GM12878 (cell line): ENCODE measurements at regions of chr3 and their contacts with region 1.

Region 1: DNA sequence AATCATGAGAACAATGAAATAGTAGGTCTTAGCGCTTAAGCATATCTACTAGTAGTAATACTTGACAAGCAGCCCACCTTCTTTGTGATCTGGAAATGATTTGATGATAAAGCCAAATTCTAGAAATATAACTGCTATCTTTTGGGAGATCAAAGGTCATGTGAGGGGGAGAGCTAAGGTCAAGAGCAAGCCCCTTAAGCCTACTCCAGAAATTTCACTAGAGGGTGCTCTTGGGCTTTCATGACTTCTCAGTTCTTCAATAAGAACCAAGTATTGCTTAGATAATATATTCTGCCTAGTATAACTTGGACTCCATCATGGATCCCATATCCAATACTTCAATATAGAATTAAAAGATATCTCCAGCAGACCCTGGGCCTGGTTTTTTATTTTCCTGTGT is 319.6 kb downstream of the ZBTB20 start:
- DNase-seq: peak; percentile 16
- ATAC-seq: peak; percentile 92
- H3K4me3 ChIP-seq: no peak overlapping the region
- H3K27ac ChIP-seq: no peak overlapping the region
- H3K4me1 ChIP-seq: no peaks in the 10 kb centered on the region
- H3K27me3 ChIP-seq: no peaks in the 10 kb centered on the region
- CTCF ChIP-seq: peak; percentile 59 to 69 (median 61); a peak in 5 of 6 replicates
- EP300 ChIP-seq: no peak
- POLR2A ChIP-seq: no peak
- RAD21 ChIP-seq: peak; percentile 84

Region 2: DNA sequence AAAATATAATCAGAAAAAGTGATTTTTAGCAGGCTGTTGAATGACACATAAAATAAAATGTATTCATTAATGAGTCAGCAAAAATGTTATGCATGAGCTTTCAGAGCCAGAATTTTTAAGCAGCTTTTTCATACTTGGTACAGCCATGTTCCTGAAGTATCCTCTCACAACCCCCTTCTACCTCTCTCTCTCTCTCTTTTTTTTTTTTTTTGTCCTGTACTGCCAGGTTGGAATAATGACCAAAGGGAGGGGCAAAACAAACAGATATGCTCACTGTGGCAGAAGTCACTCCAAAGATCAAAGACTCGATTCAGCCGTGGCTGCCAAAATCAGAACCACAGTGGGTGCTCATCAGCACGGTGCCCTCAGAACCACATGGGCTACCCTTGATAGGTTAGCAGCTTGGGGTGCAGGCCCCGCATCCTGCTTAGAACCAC is 63.4 kb before region 1 on chr3:
- CTCF ChIA-PET with region 1: no interaction called
- POLR2A ChIA-PET with region 1: no interaction called
- RAD21 ChIA-PET with region 1: no interaction called
- SMC1A ChIA-PET with region 1: no interaction called
- in situ Hi-C with region 1: no loop called
- intact Hi-C with region 1: no loop called
- DNase-seq: no peak
- ATAC-seq: no peak
- H3K4me3 ChIP-seq: no peak overlapping the region
- H3K27ac ChIP-seq: no peak overlapping the region
- H3K4me1 ChIP-seq: no peaks in the 10 kb centered on the region
- H3K27me3 ChIP-seq: no peaks in the 10 kb centered on the region
- CTCF ChIP-seq: no peak
- EP300 ChIP-seq: no peak
- POLR2A ChIP-seq: no peak
- RAD21 ChIP-seq: no peak

Region 3: DNA sequence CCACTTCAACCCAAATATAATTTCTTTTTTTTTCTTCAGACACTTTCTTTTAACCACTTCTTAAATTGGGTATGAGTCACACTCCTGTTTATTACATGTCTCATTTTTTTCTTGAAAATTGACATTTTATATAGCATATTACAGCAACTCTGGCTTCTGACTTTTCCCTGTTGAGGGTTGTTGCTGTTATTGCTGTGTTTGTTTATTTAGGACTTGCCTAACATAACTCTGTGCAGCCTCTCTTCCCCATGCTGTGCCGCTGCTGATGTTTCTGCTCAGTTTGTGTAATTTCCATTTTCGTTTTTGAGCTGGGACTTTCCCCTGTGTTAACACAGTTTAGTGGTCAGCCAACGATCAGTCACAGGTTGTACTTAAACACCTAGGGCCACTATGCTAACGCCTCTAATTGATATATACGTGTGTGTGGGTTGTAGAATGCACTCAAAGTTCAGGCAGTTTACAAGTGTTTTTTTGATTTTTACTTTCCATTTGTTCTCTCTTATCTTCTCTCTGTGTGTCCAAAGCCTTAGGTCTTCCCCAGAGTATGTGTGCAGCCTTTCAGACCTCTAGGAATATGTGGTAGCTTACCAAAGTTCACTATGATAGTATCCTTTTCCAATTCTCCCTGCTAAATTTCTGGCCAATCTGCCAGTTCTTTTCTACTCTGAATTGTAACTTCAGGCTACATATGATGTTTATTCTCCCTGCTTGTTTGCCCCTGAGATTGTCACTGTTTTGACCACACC is 17.7 kb before region 1 on chr3:
- CTCF ChIA-PET with region 1: interaction called, 14 read pairs
- POLR2A ChIA-PET with region 1: no interaction called
- RAD21 ChIA-PET with region 1: interaction called, 5 read pairs
- SMC1A ChIA-PET with region 1: interaction called, 10 read pairs
- in situ Hi-C with region 1: no loop called
- intact Hi-C with region 1: no loop called
- DNase-seq: peak; percentile 79
- ATAC-seq: peak; percentile 99
- H3K4me3 ChIP-seq: peak overlapping the region; percentile 31; the same call in 1 of the 2 replicates
- H3K27ac ChIP-seq: peak overlapping the region; percentile 45
- H3K4me1 ChIP-seq: peaks cover 6% of the 10 kb centered on the region
- H3K27me3 ChIP-seq: no peaks in the 10 kb centered on the region
- CTCF ChIP-seq: no peak
- EP300 ChIP-seq: peak in 1 of 2 experiments; percentile 74; a peak in 2 of 4 replicates
- POLR2A ChIP-seq: no peak
- RAD21 ChIP-seq: no peak

Region 4: DNA sequence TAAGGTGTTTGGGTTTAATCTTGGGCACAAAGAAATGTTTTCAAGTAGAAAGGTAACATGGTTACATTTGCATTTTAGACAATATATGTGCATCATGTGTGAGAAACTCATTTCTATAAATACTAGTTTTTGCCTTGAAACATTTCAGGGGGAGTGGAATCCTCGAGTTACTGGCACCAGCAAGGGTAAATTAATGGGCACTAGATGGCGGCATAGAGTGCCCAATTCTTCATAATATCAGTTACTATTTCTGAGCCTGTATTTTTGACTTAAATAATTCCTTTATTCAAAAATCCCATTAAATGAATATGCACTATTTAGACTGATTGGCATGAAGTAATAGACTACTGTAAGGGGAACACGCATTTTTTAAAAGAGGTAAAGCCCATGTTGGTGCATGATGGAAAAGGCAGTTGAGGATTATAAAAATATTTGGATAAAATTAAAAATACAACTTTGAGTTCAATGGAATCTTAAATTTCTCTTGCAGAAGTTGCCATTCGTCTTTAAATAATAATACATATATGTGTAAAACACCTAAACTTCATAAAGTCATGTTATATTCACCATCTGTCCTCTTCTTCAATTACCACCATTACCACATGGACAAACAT is 213.3 kb after region 1 on chr3:
- CTCF ChIA-PET with region 1: interaction called, 4 read pairs
- POLR2A ChIA-PET with region 1: no interaction called
- RAD21 ChIA-PET with region 1: no interaction called
- SMC1A ChIA-PET with region 1: interaction called, 9 read pairs
- in situ Hi-C with region 1: no loop called
- intact Hi-C with region 1: loop called (anchors 1 kb)
- DNase-seq: peak; percentile 2
- ATAC-seq: peak; percentile 77
- H3K4me3 ChIP-seq: no peak overlapping the region
- H3K27ac ChIP-seq: no peak overlapping the region
- H3K4me1 ChIP-seq: no peaks in the 10 kb centered on the region
- H3K27me3 ChIP-seq: no peaks in the 10 kb centered on the region
- CTCF ChIP-seq: peak; percentile 62 to 66 (median 64)
- EP300 ChIP-seq: no peak
- POLR2A ChIP-seq: no peak
- RAD21 ChIP-seq: peak; percentile 59

Region 5: DNA sequence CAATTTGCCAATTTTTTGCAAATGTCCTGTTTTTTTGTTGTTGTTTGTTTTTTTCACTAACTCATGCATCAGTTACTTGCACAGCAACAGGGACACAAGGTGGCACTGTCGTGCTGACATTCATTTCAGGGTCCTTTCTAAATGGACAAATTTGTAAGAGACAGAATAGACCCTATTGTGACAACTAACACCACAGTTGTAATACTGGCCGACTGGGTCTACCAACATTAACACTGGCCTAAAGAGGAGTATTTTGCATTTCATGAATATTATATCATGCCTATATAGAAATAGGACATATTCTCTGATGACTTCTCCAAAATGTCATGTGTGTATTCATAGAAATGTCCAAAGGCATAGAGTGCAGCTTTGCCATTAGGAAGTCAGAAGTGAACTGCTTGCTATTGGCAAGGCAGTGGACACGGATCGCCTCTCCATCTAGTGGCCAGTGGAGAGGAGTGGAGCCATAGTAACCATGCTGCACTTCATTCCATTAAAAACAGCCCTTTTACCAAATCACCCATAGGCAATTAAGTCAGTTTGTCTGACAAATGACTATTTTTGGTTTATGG is 264.8 kb after region 1 on chr3:
- CTCF ChIA-PET with region 1: interaction called, 8 read pairs
- POLR2A ChIA-PET with region 1: no interaction called
- RAD21 ChIA-PET with region 1: interaction called, 3 read pairs
- SMC1A ChIA-PET with region 1: interaction called, 7 read pairs
- in situ Hi-C with region 1: loop called (anchors 10 kb)
- intact Hi-C with region 1: loop called (anchors 2 kb)
- DNase-seq: peak; percentile 26
- ATAC-seq: peak; percentile 81
- H3K4me3 ChIP-seq: no peak overlapping the region
- H3K27ac ChIP-seq: no peak overlapping the region
- H3K4me1 ChIP-seq: no peaks in the 10 kb centered on the region
- H3K27me3 ChIP-seq: no peaks in the 10 kb centered on the region
- CTCF ChIP-seq: peak; percentile 78 to 82 (median 78)
- EP300 ChIP-seq: no peak
- POLR2A ChIP-seq: no peak
- RAD21 ChIP-seq: peak; percentile 93

Region 6: GRCh38 chr3:115692887-115693524 is 865.5 kb after region 1 on chr3:
- CTCF ChIA-PET with region 1: no interaction called
- POLR2A ChIA-PET with region 1: no interaction called
- RAD21 ChIA-PET with region 1: interaction called, 3 read pairs
- SMC1A ChIA-PET with region 1: interaction called, 6 read pairs
- in situ Hi-C with region 1: loop called (anchors 10 kb)
- intact Hi-C with region 1: loop called (anchors 5 kb)
- DNase-seq: peak; percentile 32
- ATAC-seq: peak; percentile 99
- H3K4me3 ChIP-seq: no peak overlapping the region
- H3K27ac ChIP-seq: no peak overlapping the region
- H3K4me1 ChIP-seq: no peaks in the 10 kb centered on the region
- H3K27me3 ChIP-seq: no peaks in the 10 kb centered on the region
- CTCF ChIP-seq: peak; percentile 73 to 91 (median 82); a peak in 5 of 6 replicates
- EP300 ChIP-seq: no peak
- POLR2A ChIP-seq: no peak
- RAD21 ChIP-seq: peak; percentile 100